ENCODE measurements at regions of chr2 and their contacts with region 1.

Region 1: GRCh38 chr2:11955314-11955713 is 208.9 kb downstream of the LPIN1 start:
- DNase-seq: no peak
- ATAC-seq: no peak
- H3K4me3 ChIP-seq: no peak overlapping the region
- H3K27ac ChIP-seq: no peak overlapping the region
- H3K4me1 ChIP-seq: peaks cover 0 to 5% (median 0%) of the 10 kb centered on the region in 12 donors
- H3K27me3 ChIP-seq: peaks cover 0 to 5% (median 0%) of the 10 kb centered on the region in 9 donors
- CTCF ChIP-seq: no peak
- POLR2A ChIP-seq: no peak

Region 2: GRCh38 chr2:11850082-11850481 is 105.2 kb before region 1 on chr2:
- intact Hi-C with region 1: no loop called
- DNase-seq: no peak
- ATAC-seq: no peak
- H3K4me3 ChIP-seq: no peak overlapping the region
- H3K27ac ChIP-seq: no peak overlapping the region
- H3K4me1 ChIP-seq: no peaks in the 10 kb centered on the region
- H3K27me3 ChIP-seq: no peaks in the 10 kb centered on the region
- CTCF ChIP-seq: no peak
- POLR2A ChIP-seq: no peak

Region 3: GRCh38 chr2:11914455-11914854 is 40.9 kb before region 1 on chr2:
- intact Hi-C with region 1: no loop called
- DNase-seq: peak in 2 of 5 donors; percentile 30 to 38
- ATAC-seq: peak in 1 of 4 donors; percentile 54
- H3K4me3 ChIP-seq: no peak overlapping the region
- H3K27ac ChIP-seq: no peak overlapping the region
- H3K4me1 ChIP-seq: no peaks in the 10 kb centered on the region
- H3K27me3 ChIP-seq: no peaks in the 10 kb centered on the region
- CTCF ChIP-seq: no peak
- POLR2A ChIP-seq: no peak

Region 4: DNA sequence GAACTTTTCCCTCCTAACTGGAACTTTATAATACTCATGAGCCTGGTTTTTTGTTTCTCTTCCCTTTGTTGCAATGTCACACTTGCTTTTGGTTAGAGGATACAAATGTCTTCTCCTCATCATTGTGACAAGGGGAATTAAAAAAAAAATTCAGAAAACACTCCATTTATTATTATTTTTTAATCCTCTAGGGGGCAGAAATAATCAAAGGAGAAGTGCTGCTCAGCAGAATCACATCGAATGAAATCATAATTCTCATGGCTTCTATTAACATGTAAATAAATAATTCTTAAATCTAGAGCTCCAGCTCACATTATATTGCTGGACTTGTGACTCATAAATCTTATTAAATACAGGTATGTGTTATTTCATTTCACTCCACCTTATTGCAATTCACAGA is 1035.2 kb after region 1 on chr2:
- intact Hi-C with region 1: loop called in 1 of 10 experiments (anchors 10 kb)
- DNase-seq: no peak
- ATAC-seq: no peak
- H3K4me3 ChIP-seq: no peak overlapping the region
- H3K27ac ChIP-seq: no peak overlapping the region
- H3K4me1 ChIP-seq: no peaks in the 10 kb centered on the region
- H3K27me3 ChIP-seq: no peaks in the 10 kb centered on the region
- CTCF ChIP-seq: peak in 9 of 12 donors; percentile 17 to 47 (median 34)
- POLR2A ChIP-seq: no peak